Dorsolateral prefrontal cortex (tissue), 120 donors: ENCODE measurements at regions of chr3 and their contacts with region 1.

Region 1: GRCh38 chr3:182258538-182259177 is 534.6 kb upstream of the ATP11B start:
- DNase-seq: peak in 1 of 10 donors; percentile 21
- H3K4me3 ChIP-seq: peak overlapping the region in 15 of 59 donors; percentile 1 to 53 (median 21)
- H3K27ac ChIP-seq: peak overlapping the region in 51 of 59 donors; percentile 4 to 87 (median 70)
- H3K27me3 ChIP-seq: peaks cover 0 to 17% (median 0%) of the 10 kb centered on the region in 45 donors
- CTCF ChIP-seq: peak; percentile 49 to 89 (median 78)

Region 2: GRCh38 chr3:181709537-181710279 is 549.0 kb before region 1 on chr3:
- intact Hi-C with region 1: loop called (anchors 2 to 5 kb)
- DNase-seq: peak in 9 of 10 donors; percentile 38 to 85 (median 77)
- H3K4me3 ChIP-seq: peak overlapping the region in 58 of 59 donors; percentile 4 to 93 (median 66)
- H3K27ac ChIP-seq: peak overlapping the region; percentile 7 to 100 (median 94)
- H3K27me3 ChIP-seq: peaks cover 0 to 99% (median 51%) of the 10 kb centered on the region in 45 donors
- CTCF ChIP-seq: peak; percentile 75 to 98 (median 88)

Region 3: DNA sequence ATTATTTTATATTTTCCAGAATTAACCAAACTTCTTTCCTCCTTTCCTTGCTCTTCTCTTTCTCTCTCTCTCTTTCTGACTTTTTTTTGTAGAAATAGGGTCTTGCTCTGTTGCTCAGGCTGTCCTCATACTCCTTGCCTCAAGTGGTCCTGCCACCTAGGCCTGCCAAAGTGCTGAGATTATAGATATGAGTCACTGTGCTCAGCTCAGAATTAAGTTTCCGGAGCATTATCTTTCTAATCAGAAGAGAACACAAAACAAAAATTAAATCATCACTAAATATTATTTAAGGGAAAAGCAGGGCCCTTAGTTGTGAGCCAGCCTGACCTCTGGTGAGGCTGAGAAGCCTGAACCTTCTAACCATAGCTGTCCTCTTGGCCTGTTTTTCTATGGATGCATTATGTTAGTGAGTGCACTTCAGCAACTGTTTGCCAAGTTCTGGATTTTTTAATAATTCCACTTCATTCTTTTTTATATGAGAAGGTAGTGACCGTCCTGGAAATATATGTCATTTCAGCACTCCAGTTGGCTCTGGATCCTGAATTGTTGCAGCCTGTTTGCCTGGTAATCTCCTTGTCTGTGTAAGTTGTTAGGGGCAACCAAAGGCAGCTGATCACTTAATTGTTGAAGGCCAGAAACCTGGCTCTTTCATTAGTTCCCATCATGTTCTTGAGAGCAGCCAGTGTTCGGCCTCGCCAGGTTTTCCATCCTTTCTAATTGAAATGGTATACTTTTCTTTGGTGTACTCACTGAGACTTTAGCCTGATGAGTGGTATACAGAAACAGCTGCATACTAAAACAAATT is 378.5 kb before region 1 on chr3:
- intact Hi-C with region 1: loop called in 1 of 2 experiments (anchors 10 kb)
- DNase-seq: no peak
- H3K4me3 ChIP-seq: no peak overlapping the region
- H3K27ac ChIP-seq: peak overlapping the region in 10 of 59 donors; percentile 6 to 52 (median 20)
- H3K27me3 ChIP-seq: no peaks in the 10 kb centered on the region
- CTCF ChIP-seq: no peak

Region 4: GRCh38 chr3:182023843-182024242 is 234.8 kb before region 1 on chr3:
- intact Hi-C with region 1: no loop called
- DNase-seq: no peak
- H3K4me3 ChIP-seq: no peak overlapping the region
- H3K27ac ChIP-seq: no peak overlapping the region
- H3K27me3 ChIP-seq: no peaks in the 10 kb centered on the region
- CTCF ChIP-seq: no peak

Region 5: DNA sequence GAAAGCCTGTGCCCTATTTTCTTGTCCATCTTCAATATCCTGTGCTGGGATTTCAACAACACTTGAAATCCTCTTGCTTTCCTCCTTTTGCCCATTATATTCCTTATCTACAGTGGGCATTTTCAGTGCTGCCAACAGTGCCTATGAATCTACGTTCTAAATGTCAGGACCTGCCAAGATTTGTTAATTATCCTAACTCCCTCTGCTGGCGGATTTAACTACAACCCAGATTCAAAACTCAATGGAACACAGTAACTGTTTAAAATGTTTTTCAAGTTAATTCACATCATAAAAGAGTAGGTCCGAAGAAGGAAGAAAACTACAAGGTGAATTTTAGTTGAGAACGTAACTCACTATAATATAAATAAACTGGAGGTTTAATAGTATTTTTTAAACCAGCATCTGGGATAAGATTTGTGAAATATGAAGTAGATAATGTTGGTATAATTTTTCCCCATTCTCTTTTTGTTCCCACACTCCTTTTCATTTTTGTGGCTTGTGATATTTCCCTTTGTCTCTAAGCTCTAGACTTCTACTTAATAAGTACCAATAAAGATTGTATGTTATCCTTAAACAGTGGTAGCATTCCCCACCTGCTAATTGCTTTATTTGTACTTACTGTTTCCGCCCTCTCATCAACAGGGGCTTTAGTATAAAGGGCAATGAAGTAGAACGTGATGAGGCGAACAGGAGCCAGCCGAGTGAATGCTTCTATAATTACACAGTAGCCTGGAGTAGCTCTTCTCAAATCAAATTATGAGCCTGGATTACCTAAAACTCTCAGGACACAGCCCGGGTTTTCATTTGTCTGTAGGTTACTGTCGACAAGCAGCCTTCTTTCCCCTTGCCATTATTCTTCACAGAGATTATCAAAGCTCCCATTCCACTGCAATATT is 232.2 kb after region 1 on chr3:
- intact Hi-C with region 1: loop called in 1 of 2 experiments (anchors 10 kb)
- DNase-seq: no peak
- H3K4me3 ChIP-seq: peak overlapping the region in 4 of 59 donors; percentile 1 to 27 (median 6)
- H3K27ac ChIP-seq: peak overlapping the region in 16 of 59 donors; percentile 4 to 73 (median 36)
- H3K27me3 ChIP-seq: no peaks in the 10 kb centered on the region
- CTCF ChIP-seq: peak; percentile 47 to 82 (median 68)

Region 6: DNA sequence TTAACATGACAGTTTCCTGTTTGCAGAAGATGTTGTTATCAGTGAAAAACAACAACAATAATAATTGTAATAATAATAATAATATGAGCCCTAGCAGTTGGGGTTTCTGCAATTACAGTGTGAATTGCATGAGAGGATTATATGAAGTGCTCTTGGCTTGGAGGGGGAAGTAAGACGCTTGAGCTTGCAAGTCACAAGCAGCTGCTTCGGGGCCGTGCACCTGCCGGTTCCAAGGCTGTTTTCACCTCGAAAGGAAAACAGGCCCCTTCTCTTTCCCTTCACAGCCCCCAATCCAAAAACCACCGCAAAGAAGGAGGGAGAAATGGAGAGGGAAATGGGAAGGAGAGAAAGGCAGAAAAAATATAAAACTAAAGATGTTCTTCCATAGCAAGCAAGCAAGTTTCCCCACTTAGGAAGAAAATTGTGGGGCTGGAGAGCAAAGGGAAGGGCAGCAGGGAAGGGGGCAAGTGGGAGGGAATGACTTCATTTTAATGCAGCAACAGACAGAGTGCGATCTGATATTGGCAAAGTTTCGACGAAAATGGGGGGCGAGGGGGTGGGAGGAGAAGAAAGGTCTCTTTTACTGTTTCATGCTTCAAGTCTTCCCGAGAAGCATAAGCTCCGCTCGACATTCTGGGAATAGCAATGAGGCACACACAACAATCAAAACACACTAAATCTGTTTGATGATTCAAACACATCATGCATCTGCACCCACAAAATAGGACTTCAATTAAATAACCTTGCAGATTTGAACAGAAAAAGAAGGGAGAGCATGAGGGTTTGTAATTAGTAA is 250.5 kb after region 1 on chr3:
- intact Hi-C with region 1: no loop called
- DNase-seq: peak in 1 of 10 donors; percentile 34
- H3K4me3 ChIP-seq: peak overlapping the region in 46 of 59 donors; percentile 1 to 58 (median 34)
- H3K27ac ChIP-seq: peak overlapping the region in 51 of 59 donors; percentile 3 to 85 (median 69)
- H3K27me3 ChIP-seq: no peaks in the 10 kb centered on the region
- CTCF ChIP-seq: no peak

Region 7: GRCh38 chr3:182683453-182683852 is 424.8 kb after region 1 on chr3:
- intact Hi-C with region 1: loop called (anchors 5 to 10 kb)
- DNase-seq: peak in 9 of 10 donors; percentile 35 to 85 (median 63)
- H3K4me3 ChIP-seq: peak overlapping the region in 58 of 59 donors; percentile 21 to 84 (median 72)
- H3K27ac ChIP-seq: peak overlapping the region in 55 of 59 donors; percentile 12 to 86 (median 75)
- H3K27me3 ChIP-seq: peaks cover 0 to 27% (median 2%) of the 10 kb centered on the region in 45 donors
- CTCF ChIP-seq: peak; percentile 76 to 99 (median 93)

Region 8: GRCh38 chr3:182937293-182938051 is 678.8 kb after region 1 on chr3:
- intact Hi-C with region 1: no loop called
- DNase-seq: no peak
- H3K4me3 ChIP-seq: no peak overlapping the region
- H3K27ac ChIP-seq: peak overlapping the region in 3 of 59 donors; percentile 10 to 15 (median 12)
- H3K27me3 ChIP-seq: no peaks in the 10 kb centered on the region
- CTCF ChIP-seq: no peak